ENCODE measurements at regions of chr11 and their contacts with region 1.

Region 1: DNA sequence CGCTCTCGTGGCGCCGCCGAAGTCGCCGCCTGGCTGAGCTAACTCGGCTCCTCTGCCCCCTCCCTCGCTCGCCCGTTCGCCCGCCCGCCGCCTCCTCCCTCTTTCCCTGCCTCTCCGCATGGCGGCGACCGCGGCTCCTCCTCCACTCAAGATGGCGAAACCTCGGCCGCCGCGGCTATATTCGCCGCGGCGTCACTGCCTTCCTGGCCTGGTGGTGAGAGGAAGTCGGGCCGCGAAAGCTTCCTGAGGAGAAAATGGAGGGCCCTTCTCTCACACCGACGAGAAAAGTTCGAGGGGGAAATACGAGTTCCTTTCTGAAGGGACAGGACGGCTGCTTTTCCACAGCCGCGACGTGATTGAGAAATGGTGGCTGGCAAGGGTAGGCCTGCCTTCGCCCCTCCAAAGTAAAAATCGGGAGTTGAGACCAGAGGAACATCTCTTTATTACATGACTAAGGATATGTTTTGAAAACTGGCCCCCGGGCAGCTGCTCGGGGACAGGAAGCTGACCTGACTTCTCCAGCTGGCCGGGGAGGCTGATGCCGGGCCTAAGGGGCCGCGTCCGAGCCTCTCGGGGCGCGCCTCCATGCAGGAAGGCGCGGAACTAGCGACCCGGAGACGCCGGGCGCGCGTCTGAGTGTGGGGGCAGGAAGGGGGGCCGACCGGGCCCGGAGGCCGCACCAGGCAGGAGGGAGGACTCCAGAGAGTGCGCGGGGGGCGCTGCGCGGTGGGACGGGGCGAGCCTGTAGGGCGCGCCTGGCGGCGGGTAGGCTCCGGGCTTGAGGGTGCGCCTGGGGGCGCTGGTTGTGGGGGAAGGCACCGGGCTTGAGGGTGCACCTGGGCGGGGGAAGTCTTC is at the start of gene DDX6:
- DNase-seq: peak; percentile 93
- ATAC-seq: peak; percentile 59
- H3K4me3 Mint-ChIP-seq: peak within 1 kb of the TSS; percentile 99
- H3K27ac Mint-ChIP-seq: peak within 1 kb of the TSS; percentile 100
- H3K4me1 Mint-ChIP-seq: peaks cover 24% of the 10 kb centered on the region
- H3K27me3 Mint-ChIP-seq: no peaks in the 10 kb centered on the region
- total RNA-seq, gene DDX6: 127 to 153 TPM

Region 2: DNA sequence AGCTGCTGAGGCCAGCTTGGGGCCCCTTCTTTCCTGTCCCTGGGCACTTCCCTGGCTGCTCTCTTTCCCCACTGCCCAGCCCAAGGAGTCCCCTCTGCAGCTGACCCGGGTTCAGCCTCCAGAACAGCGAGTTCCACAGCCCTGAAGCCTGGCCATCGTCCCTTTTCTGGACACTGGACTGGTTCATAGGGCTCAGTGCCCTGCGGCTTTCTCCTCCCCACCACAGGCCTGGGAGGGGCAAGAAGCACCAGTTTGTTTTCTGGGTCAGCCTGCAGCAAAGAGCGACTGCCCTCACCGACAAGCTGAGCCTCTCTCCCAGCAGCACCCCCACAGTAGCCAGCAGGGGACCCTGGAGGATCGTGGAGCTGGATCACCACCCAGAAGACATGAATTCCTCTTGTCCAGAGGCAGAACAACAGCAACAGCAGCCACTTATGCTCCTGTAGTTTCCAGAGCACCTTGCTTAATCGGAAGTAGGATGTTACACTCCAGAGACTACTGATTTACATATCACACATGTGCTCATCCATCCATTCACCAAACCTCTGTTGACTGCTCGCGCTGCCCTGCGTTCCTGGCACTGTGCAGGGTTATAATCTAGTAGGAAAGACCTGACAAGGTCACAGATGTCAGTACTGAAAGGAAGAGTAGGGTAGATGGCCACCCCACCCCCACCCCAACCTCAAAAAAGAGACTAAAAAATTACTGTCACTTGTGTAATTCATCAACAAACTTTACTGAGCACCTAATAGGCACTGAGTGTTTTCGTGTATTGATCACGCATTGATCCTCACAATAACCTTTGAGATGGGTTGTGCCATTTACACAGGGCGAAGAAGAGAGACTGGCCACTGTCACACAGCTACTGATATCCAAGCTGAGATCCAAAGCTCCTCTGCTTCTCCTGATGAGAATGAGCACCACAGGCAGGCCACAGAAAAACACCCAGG is 79.3 kb after region 1 on chr11:
- CTCF ChIA-PET with region 1: interaction called, 42 read pairs
- DNase-seq: peak; percentile 66
- ATAC-seq: peak; percentile 37
- H3K4me3 Mint-ChIP-seq: peak overlapping the region; percentile 51
- H3K27ac Mint-ChIP-seq: peak overlapping the region; percentile 92
- H3K4me1 Mint-ChIP-seq: peaks cover 55% of the 10 kb centered on the region
- H3K27me3 Mint-ChIP-seq: no peaks in the 10 kb centered on the region

Region 3: GRCh38 chr11:118878163-118878563 is 86.8 kb after region 1 on chr11:
- CTCF ChIA-PET with region 1: interaction called, 31 read pairs
- DNase-seq: no peak
- ATAC-seq: no peak
- H3K4me3 Mint-ChIP-seq: no peak overlapping the region
- H3K27ac Mint-ChIP-seq: peak overlapping the region; percentile 20
- H3K4me1 Mint-ChIP-seq: peaks cover 69% of the 10 kb centered on the region
- H3K27me3 Mint-ChIP-seq: peaks cover 2% of the 10 kb centered on the region

Region 4: GRCh38 chr11:118895142-118896039 is 104.1 kb after region 1 on chr11:
- CTCF ChIA-PET with region 1: interaction called, 12 read pairs
- DNase-seq: peak; percentile 68
- ATAC-seq: peak; percentile 60
- H3K4me3 Mint-ChIP-seq: no peak overlapping the region
- H3K27ac Mint-ChIP-seq: peak overlapping the region; percentile 73
- H3K4me1 Mint-ChIP-seq: peaks cover 41% of the 10 kb centered on the region
- H3K27me3 Mint-ChIP-seq: no peaks in the 10 kb centered on the region

Region 5: DNA sequence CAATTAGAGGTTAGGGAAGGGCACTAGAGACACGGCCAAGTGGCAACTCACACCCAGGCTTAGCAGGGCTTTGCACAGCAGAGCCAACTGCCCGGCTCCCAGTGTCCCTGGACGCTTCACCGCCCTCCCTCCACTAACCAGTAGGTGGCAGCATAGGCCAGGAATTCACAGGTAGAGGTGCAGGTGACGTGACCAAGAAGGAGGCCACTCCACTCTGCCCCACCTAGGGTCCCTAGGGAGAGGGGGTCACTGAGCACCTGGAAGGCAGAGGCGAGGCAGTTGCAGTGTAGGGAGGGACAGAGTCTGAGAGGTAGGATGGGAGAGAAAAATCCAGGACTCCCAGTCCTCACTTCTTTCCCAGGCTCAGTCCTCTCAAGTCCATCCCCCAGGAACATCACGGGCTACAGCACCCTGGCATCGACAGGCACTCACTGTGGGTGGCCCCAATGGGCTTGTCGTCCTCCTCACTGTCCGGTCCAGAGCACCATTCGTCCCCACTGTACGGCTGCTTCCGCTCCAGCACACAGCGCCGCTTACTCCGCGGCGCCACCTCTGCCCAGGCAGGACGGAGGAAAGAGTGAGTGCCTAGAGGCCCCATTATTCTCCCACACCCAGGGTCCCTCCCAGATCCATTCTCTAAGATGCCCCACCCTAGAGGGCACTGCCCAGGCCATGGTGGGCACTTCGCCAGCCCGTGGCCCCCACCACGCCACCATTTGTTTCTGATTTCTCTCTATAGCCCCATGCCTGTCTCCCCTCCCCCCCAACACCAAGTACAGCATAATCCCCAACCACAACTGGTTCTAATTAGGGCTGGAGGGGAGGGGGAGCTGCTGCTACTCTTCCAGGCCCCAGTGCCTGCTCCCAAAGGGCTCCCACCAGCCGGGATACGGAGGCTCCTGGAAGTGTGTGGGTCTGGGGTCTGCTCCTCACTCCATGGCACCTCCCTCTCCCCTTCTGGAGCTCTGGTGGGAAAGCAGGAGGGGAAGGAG is 116.0 kb after region 1 on chr11:
- CTCF ChIA-PET with region 1: interaction called, 34 read pairs
- DNase-seq: peak; percentile 91
- ATAC-seq: peak; percentile 79
- H3K4me3 Mint-ChIP-seq: no peak overlapping the region
- H3K27ac Mint-ChIP-seq: no peak overlapping the region
- H3K4me1 Mint-ChIP-seq: peaks cover 27% of the 10 kb centered on the region
- H3K27me3 Mint-ChIP-seq: no peaks in the 10 kb centered on the region

Region 6: DNA sequence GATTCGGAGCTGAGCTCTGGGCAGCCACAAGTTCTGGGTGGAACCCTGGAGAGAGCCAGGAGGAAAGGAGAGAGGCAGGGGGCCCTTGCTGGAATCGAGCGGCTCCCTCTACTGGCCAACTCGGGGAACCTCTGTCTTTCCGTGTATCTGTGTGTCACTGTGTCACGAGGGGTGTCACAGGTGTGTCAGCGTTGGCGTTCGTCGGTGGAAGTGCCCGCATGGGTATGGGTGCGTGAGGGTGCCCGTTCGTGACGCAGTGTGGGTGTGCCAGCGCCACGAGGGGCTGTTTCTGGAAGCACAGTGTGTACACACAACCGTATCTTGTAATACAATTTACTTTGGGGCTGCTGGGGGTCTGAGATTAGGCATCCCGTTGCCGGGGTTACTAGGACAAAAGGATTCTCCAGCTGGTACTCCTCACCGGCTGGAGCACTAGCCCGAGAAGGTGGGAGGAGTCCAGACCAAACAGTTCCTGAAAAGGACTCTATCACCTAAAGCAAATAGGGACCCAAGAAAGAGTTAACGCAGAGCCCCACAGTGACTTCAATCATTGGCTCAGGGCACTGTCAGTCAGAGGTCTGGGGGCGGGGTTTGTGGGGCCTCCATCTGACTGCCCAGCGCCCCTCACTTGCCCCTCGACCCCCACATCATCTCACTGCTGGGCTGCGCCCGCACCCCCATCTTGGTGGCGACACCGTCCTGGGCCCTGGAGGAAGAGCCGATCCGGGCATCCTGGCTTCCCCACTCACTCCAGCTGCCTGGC is 137.0 kb after region 1 on chr11:
- CTCF ChIA-PET with region 1: interaction called, 21 read pairs
- DNase-seq: peak; percentile 94
- ATAC-seq: peak; percentile 60
- H3K4me3 Mint-ChIP-seq: peak overlapping the region; percentile 92
- H3K27ac Mint-ChIP-seq: peak overlapping the region; percentile 98
- H3K4me1 Mint-ChIP-seq: peaks cover 44% of the 10 kb centered on the region
- H3K27me3 Mint-ChIP-seq: no peaks in the 10 kb centered on the region